HCT116 (cell line): ENCODE measurements at regions of chr20 and their contacts with region 1.

Region 1: GRCh38 chr20:53547664-53548239 is 45.9 kb downstream of the ZNF217 start:
- DNase-seq: peak; percentile 42
- ATAC-seq: peak; percentile 87
- H3K4me3 ChIP-seq: no peak overlapping the region
- H3K27ac ChIP-seq: no peak overlapping the region
- H3K4me1 ChIP-seq: no peaks in the 10 kb centered on the region
- H3K27me3 ChIP-seq: no peaks in the 10 kb centered on the region
- CTCF ChIP-seq: peak; percentile 67 to 86 (median 80); a peak in 5 of 6 replicates
- POLR2A ChIP-seq: no peak
- RAD21 ChIP-seq: peak; percentile 86

Region 2: DNA sequence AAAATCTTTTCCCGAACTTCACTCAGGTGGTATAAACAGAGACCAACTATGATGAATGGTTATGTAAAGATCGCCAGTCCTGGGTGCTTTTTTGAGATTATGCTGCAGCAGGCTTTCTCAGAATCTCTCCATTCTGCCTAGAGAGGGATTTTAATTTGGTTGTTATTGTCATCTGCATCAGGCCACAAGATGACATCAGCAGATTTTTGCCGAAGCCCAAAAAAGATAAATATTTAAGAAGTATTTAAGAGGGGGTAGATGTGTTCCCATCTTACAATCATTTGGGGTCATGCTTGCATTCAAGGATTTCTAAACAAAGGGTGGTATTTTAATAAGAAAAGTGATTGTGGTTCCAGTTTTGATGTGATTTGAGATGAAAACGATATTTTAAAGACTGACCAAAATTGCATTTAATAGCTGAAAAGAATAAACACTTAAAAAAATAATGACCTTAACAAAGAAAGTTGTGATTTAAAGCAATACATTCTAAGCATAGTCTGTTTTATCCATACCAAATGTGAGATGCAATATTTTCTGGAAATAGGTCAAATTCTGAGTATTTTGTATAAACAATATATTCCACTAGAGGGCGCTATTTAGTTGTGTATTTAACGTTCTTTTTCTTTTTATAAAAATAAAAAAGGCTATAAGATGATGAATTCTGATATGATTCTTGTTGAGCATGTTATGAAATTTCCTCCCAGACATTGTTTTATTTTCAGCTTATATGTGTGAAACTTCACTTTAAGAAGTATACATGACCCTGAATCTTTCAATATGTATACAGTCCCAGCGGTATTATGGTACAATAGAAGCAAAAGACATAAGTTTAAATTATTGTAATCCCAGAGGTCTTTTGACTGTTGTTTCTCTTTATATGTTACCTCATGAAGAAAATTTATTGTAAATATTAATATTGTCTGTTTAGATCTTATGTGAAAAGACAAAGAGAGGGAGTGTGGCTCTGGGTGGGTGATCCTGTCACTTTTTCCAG is 1305.2 kb before region 1 on chr20:
- CTCF ChIA-PET with region 1: no interaction called
- POLR2A ChIA-PET with region 1: no interaction called
- RAD21 ChIA-PET with region 1: no interaction called
- intact Hi-C with region 1: loop called (anchors 2 kb)
- DNase-seq: no peak
- ATAC-seq: no peak
- H3K4me3 ChIP-seq: no peak overlapping the region
- H3K27ac ChIP-seq: no peak overlapping the region
- H3K4me1 ChIP-seq: no peaks in the 10 kb centered on the region
- H3K27me3 ChIP-seq: no peaks in the 10 kb centered on the region
- CTCF ChIP-seq: peak in 2 of 3 experiments; percentile 26 to 71; a peak in 3 of 6 replicates
- POLR2A ChIP-seq: no peak
- RAD21 ChIP-seq: peak; percentile 45

Region 3: DNA sequence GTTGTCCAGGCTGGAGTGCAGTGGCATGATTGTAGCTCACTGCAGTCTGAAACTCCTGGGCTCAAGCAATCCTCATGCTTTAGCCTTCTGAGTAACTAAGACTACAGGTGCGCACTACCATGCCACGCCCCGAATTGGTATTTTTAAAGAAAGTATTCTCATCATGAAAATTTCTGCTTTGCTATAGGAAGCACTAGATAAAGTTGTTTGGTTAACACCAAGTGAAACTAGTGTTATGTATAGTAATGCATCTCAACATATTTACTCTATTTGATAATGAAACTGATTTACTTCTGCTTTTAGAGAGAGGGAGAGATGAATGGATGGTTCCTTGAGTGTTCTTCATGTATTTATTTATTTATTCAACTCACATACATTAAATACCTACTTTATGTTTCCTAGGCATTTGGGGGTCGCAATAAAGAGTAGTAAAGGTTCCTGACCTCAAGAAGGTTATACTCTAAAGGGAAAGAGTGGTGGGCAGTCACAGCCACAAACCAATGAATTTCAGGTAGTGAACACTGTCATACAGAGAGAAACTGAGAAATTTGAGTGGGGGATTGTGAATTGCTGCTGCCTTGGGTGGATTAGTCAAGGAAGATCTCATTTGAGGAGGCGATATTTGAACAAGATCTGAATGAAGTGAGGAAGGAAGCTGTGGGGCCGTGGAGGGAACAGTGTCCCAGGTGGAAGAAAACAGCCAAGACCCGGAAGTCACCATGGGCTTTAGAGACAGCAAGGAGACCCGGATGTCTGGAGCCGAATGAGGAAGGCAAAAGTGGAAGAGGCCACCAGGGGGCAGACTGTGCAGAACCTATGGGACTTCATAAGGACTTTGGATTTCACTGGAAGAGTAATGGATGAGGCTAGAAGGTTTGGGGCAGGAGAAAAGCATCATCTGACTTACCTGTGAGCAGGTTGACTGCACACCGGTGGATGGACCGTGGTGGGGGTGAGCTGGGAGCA is 390.0 kb before region 1 on chr20:
- CTCF ChIA-PET with region 1: interaction called, 3 read pairs
- POLR2A ChIA-PET with region 1: no interaction called
- RAD21 ChIA-PET with region 1: no interaction called
- intact Hi-C with region 1: loop called (anchors 5 kb)
- DNase-seq: peak; percentile 72
- ATAC-seq: peak; percentile 76
- H3K4me3 ChIP-seq: no peak overlapping the region
- H3K27ac ChIP-seq: no peak overlapping the region
- H3K4me1 ChIP-seq: peaks cover 3 to 8% of the 10 kb centered on the region in 2 experiments; a peak in 3 of 4 replicates
- H3K27me3 ChIP-seq: 0 out of 2 replicates have a peak, but pooled peaks cover 5% of the 10 kb centered on the region
- CTCF ChIP-seq: peak; percentile 37 to 80 (median 77); a peak in 5 of 6 replicates
- POLR2A ChIP-seq: no peak
- RAD21 ChIP-seq: peak; percentile 45; the same call in 1 of the 2 replicates

Region 4: DNA sequence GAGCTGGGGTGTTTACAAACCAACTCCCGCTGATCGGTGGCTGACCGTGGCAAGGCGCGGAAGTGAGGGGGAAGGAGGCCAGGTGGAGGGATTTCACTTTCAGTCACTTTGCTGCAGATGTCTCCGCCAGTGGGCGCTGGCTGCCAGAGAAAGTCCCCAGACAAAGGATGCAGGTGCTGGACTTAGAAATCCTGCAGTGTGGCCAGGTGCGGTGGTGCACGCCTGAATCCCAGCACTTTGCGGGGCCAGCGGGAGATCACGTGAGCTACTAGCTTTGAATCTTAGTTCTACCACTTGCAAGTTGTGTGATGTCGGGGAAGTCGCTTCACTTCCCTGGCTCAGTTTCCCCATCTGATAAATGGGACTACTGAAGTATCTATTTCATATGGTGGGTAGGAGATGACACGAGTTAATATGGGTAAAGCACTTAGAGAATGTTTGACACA is 134.5 kb before region 1 on chr20:
- CTCF ChIA-PET with region 1: interaction called, 14 read pairs
- POLR2A ChIA-PET with region 1: no interaction called
- RAD21 ChIA-PET with region 1: interaction called, 8 to 12 read pairs
- intact Hi-C with region 1: loop called (anchors 1 kb)
- DNase-seq: peak; percentile 50
- ATAC-seq: peak; percentile 96
- H3K4me3 ChIP-seq: no peak overlapping the region
- H3K27ac ChIP-seq: no peak overlapping the region
- H3K4me1 ChIP-seq: no peaks in the 10 kb centered on the region
- H3K27me3 ChIP-seq: peaks cover 4% of the 10 kb centered on the region; the same call in 1 of the 2 replicates
- CTCF ChIP-seq: peak; percentile 50 to 66 (median 60); a peak in 5 of 6 replicates
- POLR2A ChIP-seq: no peak
- RAD21 ChIP-seq: peak; percentile 73